ENCODE measurements at regions of chr12 and their contacts with region 1.

Region 1: GRCh38 chr12:130871286-130872178 is at the start of gene RAN:
- DNase-seq: peak; percentile 65 to 96 (median 91)

Region 2: GRCh38 chr12:130838951-130839769 is 32.4 kb before region 1 on chr12 and contains the start of gene STX2:
- intact Hi-C with region 1: loop called (anchors 2 kb)
- DNase-seq: peak; percentile 58 to 96 (median 90)

Measured in head of caudate nucleus (tissue), 42 donors.